Lower lobe of right lung (tissue), 2 donors: ENCODE measurements at regions of chr6 and their contacts with region 1.

Region 1: GRCh38 chr6:31366693-31367470 is 9.9 kb upstream of the HLA-B start:
- DNase-seq: peak; percentile 93
- ATAC-seq: peak; percentile 99
- H3K4me3 ChIP-seq: peak overlapping the region; percentile 49
- H3K27ac ChIP-seq: no peak overlapping the region
- H3K4me1 ChIP-seq: peaks cover 10% of the 10 kb centered on the region
- H3K27me3 ChIP-seq: no peaks in the 10 kb centered on the region
- CTCF ChIP-seq: peak; percentile 95

Region 2: GRCh38 chr6:31139599-31139998 is 227.3 kb before region 1 on chr6:
- intact Hi-C with region 1: loop called (anchors 10 kb)
- DNase-seq: no peak
- ATAC-seq: no peak
- H3K4me3 ChIP-seq: no peak overlapping the region
- H3K27ac ChIP-seq: no peak overlapping the region
- H3K4me1 ChIP-seq: peaks cover 24% of the 10 kb centered on the region
- H3K27me3 ChIP-seq: no peaks in the 10 kb centered on the region
- CTCF ChIP-seq: no peak

Region 3: DNA sequence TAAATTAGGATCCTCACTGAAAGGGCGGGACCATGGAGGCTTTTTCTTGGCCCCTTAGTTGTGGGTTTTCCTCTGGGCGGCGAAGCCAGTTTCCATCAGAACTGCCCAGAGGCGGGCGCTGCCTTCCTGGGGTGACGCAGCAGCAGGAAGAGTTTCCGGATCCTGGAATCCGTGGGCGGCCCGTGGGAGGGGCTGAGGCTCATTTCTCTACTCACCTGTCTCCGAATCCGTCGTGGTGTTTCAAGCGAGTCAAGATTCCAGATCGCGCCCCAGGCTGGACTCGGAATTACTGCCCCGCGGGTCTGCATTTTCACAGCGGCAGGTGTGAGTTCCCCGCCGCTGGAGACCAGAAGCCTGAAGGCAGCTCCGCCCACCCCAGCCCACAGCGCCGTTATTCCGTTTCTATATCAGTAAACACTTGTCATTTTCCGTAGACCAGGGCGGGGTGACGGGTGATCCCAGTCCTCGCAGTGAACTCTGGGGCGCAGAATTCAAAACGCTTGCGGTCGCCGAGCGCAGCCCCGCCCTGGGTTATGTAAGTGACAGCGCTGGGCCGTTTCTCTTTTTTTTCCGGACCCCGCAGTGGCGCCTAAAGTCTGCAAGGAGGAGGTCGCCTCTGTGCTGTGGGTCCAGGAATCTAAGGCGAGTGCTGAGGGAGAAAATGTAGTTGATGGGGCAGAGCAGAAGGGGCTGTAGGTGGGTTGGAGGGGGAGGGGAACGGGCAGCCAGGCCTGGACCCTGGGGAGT is 169.2 kb before region 1 on chr6:
- intact Hi-C with region 1: loop called (anchors 10 kb)
- DNase-seq: peak; percentile 97
- ATAC-seq: peak; percentile 93 to 94
- H3K4me3 ChIP-seq: peak overlapping the region; percentile 72
- H3K27ac ChIP-seq: peak overlapping the region; percentile 99
- H3K4me1 ChIP-seq: peaks cover 39% of the 10 kb centered on the region
- H3K27me3 ChIP-seq: no peaks in the 10 kb centered on the region
- CTCF ChIP-seq: no peak

Region 4: GRCh38 chr6:31246050-31246521 is 120.8 kb before region 1 on chr6:
- intact Hi-C with region 1: no loop called
- DNase-seq: no peak
- ATAC-seq: peak; percentile 42 to 57
- H3K4me3 ChIP-seq: no peak overlapping the region
- H3K27ac ChIP-seq: no peak overlapping the region
- H3K4me1 ChIP-seq: no peaks in the 10 kb centered on the region
- H3K27me3 ChIP-seq: no peaks in the 10 kb centered on the region
- CTCF ChIP-seq: no peak

Region 5: GRCh38 chr6:31453259-31453658 is 86.4 kb after region 1 on chr6:
- intact Hi-C with region 1: no loop called
- DNase-seq: no peak
- ATAC-seq: no peak
- H3K4me3 ChIP-seq: no peak overlapping the region
- H3K27ac ChIP-seq: no peak overlapping the region
- H3K4me1 ChIP-seq: no peaks in the 10 kb centered on the region
- H3K27me3 ChIP-seq: no peaks in the 10 kb centered on the region
- CTCF ChIP-seq: no peak